ENCODE measurements at regions of chr11 and their contacts with region 1.

Region 1: GRCh38 chr11:19311308-19312030 is 70.7 kb upstream of the E2F8 start:
- DNase-seq: peak; percentile 52
- H3K4me3 ChIP-seq: no peak overlapping the region
- H3K27ac ChIP-seq: no peak overlapping the region
- H3K4me1 ChIP-seq: no peaks in the 10 kb centered on the region
- H3K27me3 ChIP-seq: peaks cover 8% of the 10 kb centered on the region
- CTCF ChIP-seq: peak; percentile 81

Region 2: DNA sequence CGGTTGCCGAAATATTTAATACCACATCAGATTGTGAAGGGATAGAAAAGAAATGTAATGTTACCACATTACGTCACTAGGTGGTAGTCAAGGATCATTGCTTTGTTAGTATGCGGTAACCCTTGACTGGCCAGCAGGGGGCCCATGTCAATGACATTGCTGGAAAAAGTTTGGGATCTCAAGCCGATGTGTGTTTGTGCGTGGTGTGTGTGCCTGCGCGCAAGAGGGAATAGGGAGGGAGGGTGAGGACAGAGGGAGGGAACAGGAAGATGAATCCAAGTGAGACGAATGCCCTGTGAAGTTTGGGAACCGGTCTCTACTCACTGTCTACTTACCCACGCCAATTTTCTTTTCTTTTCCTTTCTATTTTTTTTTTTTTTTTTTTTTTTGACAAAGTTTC is 240.2 kb before region 1 on chr11:
- CTCF ChIA-PET with region 1: no interaction called
- POLR2A ChIA-PET with region 1: no interaction called
- intact Hi-C with region 1: loop called (anchors 5 kb)
- DNase-seq: peak; percentile 87
- H3K4me3 ChIP-seq: no peak overlapping the region
- H3K27ac ChIP-seq: no peak overlapping the region
- H3K4me1 ChIP-seq: no peaks in the 10 kb centered on the region
- H3K27me3 ChIP-seq: no peaks in the 10 kb centered on the region
- CTCF ChIP-seq: peak; percentile 90

Measured in A673 (cell line).